Mucosa of descending colon (tissue), 3 donors: ENCODE measurements at regions of chr12 and their contacts with region 1.

Region 1: DNA sequence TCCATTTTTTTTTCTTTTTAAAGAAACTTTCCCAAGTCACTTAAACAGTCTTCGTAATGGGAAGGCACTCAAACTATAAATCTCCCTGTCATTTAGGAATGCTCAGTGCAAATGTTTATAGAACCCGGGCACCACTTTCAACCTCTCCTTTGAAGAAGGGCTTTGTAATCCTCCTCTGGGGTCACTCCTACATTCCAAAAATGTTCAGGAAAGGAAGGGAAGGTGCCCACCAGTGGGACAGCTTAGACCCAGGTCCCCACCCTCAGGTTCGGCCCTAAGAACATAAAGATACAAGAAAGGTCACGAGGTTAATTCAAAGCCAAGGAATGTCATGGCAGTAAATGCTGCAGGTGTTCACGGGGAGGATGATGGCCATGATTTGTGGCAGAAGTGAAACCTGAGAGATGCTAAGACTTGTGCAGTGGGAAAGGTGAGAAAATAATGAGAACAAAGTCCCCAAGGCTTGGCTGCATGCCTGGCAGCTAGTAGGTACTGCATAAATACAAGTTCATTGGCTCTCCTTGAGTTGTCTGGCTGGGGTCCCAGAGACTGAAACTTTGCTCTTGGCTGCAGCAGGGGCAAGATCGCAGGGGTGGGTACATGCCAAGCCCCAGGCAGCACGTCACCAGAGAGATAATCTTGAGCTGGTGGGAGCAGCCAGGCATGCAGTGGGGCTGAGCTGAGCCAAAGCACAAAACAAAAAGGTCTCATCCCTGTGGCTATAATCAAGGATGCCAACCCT is 21.1 kb downstream of the KRT18 start:
- DNase-seq: peak; percentile 72 to 93 (median 80)
- ATAC-seq: peak; percentile 84
- H3K4me3 ChIP-seq: no peak overlapping the region
- H3K4me1 ChIP-seq: peaks cover 6% of the 10 kb centered on the region
- CTCF ChIP-seq: no peak

Region 2: DNA sequence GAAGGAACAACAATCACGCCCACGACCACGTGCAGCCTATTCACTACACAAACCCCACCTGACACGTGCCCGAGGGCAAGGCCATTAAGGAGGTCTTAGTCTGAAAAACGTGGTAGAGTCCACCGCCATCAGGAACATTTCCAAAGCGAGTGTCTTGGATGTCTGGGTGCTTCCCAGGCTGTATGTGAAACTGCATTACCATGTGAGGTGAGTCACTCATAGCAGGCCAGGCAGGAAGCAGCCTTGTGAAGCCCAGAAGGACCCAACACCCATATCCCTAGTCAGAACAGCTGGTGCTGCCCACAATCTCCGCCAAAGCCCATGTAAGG is 132.6 kb before region 1 on chr12:
- intact Hi-C with region 1: no loop called
- DNase-seq: no peak
- ATAC-seq: no peak
- H3K4me3 ChIP-seq: no peak overlapping the region
- H3K4me1 ChIP-seq: no peaks in the 10 kb centered on the region
- CTCF ChIP-seq: no peak

Region 3: GRCh38 chr12:52903285-52903854 is 66.6 kb before region 1 on chr12:
- intact Hi-C with region 1: loop called in 1 of 2 experiments (anchors 5 kb)
- DNase-seq: peak; percentile 85 to 89 (median 88)
- ATAC-seq: peak; percentile 1
- H3K4me3 ChIP-seq: peak overlapping the region; percentile 81
- H3K4me1 ChIP-seq: peaks cover 57% of the 10 kb centered on the region
- CTCF ChIP-seq: no peak